SK-N-SH (cell line): ENCODE measurements at regions of chr21 and their contacts with region 1.

Region 1: GRCh38 chr21:41612674-41613532 is 104.9 kb upstream of the TMPRSS2 start:
- DNase-seq: peak; percentile 79
- H3K4me3 ChIP-seq: peak overlapping the region in 1 of 2 experiments; percentile 8; a peak in 1 of 4 replicates
- H3K27ac ChIP-seq: peak overlapping the region; percentile 60 to 100
- H3K4me1 ChIP-seq: peaks cover 10 to 23% of the 10 kb centered on the region in 2 experiments; a peak in 3 of 4 replicates
- H3K27me3 ChIP-seq: no peaks in the 10 kb centered on the region
- CTCF ChIP-seq: peak; percentile 85
- EP300 ChIP-seq: peak in 1 of 2 experiments; percentile 49; a peak in 1 of 4 replicates
- RAD21 ChIP-seq: peak; percentile 74

Region 2: GRCh38 chr21:41622831-41623548 is 10.1 kb after region 1 on chr21:
- CTCF ChIA-PET with region 1: interaction called, 15 read pairs
- POLR2A ChIA-PET with region 1: no interaction called
- DNase-seq: no peak
- H3K4me3 ChIP-seq: no peak overlapping the region
- H3K27ac ChIP-seq: no peak overlapping the region
- H3K4me1 ChIP-seq: no peaks in the 10 kb centered on the region
- H3K27me3 ChIP-seq: no peaks in the 10 kb centered on the region
- CTCF ChIP-seq: no peak
- EP300 ChIP-seq: no peak
- RAD21 ChIP-seq: no peak

Region 3: DNA sequence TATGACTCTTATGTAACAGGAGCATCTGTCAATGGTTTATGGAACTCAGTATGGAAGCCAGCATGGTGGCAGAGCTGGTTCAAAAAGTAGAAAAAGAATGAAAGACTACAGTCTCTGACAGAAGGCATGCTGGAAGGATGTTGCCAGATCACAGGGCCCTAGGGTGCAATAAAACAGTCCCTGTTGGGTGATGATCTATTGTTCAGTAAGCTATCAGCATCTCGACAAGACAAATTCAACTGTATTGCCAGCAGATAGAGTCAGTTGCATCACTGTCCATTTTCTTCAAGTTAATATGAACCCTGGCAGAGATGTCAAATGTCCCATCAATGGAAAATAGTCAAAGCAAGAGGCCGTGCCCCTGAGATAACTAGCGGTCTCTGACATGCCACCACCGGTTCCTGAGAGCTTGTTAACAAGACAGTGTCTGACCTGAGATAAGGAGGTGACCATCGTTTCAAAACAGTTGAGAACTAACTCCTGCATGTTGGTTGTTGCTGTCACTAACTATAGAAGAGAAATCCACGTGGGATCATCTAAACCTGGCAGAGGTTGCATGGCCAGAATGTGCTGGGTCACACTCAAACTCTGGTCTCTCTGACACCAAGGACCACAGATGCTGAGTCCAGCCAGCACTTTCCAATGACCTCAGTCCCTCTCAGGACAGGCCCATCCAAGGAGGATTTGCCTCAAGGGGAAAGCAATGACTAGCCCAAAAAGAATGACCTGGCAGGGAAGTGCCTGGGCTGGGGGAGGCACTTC is 28.0 kb after region 1 on chr21:
- CTCF ChIA-PET with region 1: interaction called, 10 read pairs
- POLR2A ChIA-PET with region 1: no interaction called
- DNase-seq: no peak
- H3K4me3 ChIP-seq: no peak overlapping the region
- H3K27ac ChIP-seq: peak overlapping the region; percentile 78 to 99; a peak in 3 of 4 replicates
- H3K4me1 ChIP-seq: peaks cover 0 to 24% of the 10 kb centered on the region in 2 experiments; a peak in 2 of 4 replicates
- H3K27me3 ChIP-seq: no peaks in the 10 kb centered on the region
- CTCF ChIP-seq: no peak
- EP300 ChIP-seq: no peak
- RAD21 ChIP-seq: no peak

Region 4: GRCh38 chr21:41768437-41769061 is 155.6 kb after region 1 on chr21:
- CTCF ChIA-PET with region 1: interaction called, 10 read pairs
- POLR2A ChIA-PET with region 1: no interaction called
- DNase-seq: peak; percentile 60
- H3K4me3 ChIP-seq: peak overlapping the region; percentile 60 to 76; a peak in 3 of 4 replicates
- H3K27ac ChIP-seq: peak overlapping the region in 1 of 2 experiments; percentile 78; a peak in 2 of 4 replicates
- H3K4me1 ChIP-seq: no peaks in the 10 kb centered on the region
- H3K27me3 ChIP-seq: no peaks in the 10 kb centered on the region
- CTCF ChIP-seq: peak; percentile 67
- EP300 ChIP-seq: peak in 1 of 2 experiments; percentile 53; a peak in 1 of 4 replicates
- RAD21 ChIP-seq: peak; percentile 42

Region 5: DNA sequence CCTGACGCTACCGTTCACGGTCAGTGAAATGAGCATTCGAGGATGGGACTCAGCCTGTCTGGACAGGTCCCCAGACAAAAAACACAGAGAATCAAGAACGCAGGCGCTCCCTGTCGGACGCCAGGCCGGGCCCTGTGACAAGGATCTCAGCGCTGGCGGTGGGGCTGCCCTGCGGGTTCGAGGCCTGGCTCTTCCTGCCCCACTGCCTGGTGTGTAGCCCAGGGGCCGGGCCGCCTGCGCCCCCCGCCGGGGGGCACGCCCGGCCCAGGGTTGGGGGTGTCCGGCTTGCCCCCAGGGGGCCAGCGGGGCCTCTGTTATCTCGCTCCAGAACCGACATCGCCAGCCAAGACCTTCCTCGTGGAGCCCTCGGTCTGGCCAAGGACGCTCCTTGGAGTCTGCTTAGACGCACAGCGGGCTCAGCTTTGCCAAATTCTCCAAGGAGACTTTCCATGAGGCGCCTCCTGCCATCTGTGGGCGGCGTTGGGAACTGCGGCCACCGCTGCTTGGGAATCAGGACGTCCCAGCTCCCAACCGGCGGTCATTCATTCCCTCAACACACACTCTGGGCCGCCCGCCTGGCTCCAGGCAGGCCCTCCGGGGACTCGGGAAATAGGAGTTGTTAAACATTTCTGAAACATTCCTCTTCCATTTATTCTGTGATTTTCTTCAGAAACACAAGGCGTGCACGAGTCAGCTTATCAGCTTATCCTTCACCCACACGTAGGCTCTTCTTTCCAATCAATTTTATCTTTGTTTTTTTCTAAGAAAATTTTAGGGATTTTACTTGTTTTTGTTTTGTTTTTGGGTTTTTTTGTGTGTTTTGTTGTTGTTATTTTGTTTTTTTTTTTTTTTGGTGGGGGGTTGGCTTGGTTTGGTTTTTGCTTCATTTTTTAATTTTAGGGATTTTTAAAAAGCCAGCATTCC is 165.3 kb after region 1 on chr21:
- CTCF ChIA-PET with region 1: interaction called, 75 read pairs
- POLR2A ChIA-PET with region 1: no interaction called
- DNase-seq: peak; percentile 81
- H3K4me3 ChIP-seq: peak overlapping the region in 1 of 2 experiments; percentile 43; a peak in 1 of 4 replicates
- H3K27ac ChIP-seq: peak overlapping the region in 1 of 2 experiments; percentile 6; a peak in 1 of 4 replicates
- H3K4me1 ChIP-seq: 0 out of 4 replicates have a peak, but pooled peaks cover 0 to 3% of the 10 kb centered on the region in 2 experiments
- H3K27me3 ChIP-seq: no peaks in the 10 kb centered on the region
- CTCF ChIP-seq: peak; percentile 88
- EP300 ChIP-seq: no peak
- RAD21 ChIP-seq: peak; percentile 77

Region 6: DNA sequence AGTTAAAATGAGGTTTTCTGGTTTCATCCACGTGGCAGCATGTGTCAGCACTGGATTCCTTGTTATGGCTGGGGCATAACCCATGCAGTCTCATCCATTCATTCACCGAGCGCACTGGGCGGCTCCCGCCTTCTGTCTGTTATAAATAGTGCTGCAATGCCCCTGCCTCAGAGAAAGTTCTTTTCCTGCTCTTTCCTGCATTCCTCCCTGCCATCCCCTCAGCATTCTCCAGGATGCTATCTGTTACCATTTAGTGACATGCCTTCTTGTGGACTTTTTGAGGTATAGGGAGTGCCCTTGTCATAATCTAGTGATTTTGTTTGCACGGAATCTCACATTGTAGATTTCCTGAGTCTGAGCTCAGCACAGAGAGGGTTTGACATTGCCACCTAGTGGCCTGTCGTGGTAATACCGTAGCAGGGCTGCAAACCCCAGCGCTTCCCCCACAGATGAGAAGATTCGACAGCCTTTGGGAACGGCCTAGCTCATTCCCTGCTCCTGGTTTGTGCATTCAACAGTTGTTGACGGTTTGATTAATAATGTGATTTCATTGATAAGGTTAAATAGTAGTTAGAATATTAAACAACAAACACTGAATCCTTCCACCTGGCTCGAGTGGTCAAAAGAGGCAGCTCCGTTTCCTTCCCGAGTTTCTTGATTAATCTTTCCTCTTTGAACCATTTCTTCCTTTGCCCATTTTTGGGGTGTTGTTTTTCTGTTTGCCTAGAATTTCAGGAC is 504.5 kb after region 1 on chr21:
- CTCF ChIA-PET with region 1: interaction called, 11 read pairs
- POLR2A ChIA-PET with region 1: no interaction called
- DNase-seq: peak; percentile 83
- H3K4me3 ChIP-seq: peak overlapping the region; percentile 15 to 53; a peak in 3 of 4 replicates
- H3K27ac ChIP-seq: no peak overlapping the region
- H3K4me1 ChIP-seq: peaks cover 0 to 29% of the 10 kb centered on the region in 2 experiments; a peak in 1 of 4 replicates
- H3K27me3 ChIP-seq: peaks cover 19% of the 10 kb centered on the region
- CTCF ChIP-seq: peak; percentile 91
- EP300 ChIP-seq: no peak; a peak in 1 of 4 replicates
- RAD21 ChIP-seq: peak; percentile 88